AG04450 (cell line): ENCODE measurements at regions of chr12 and their contacts with region 1.

Region 1: GRCh38 chr12:62581288-62582064 is 114.8 kb downstream of the MON2 start:
- DNase-seq: peak; percentile 20
- H3K4me3 ChIP-seq: no peak overlapping the region
- H3K27ac ChIP-seq: no peak overlapping the region
- H3K27me3 ChIP-seq: no peaks in the 10 kb centered on the region
- CTCF ChIP-seq: peak; percentile 77

Region 2: DNA sequence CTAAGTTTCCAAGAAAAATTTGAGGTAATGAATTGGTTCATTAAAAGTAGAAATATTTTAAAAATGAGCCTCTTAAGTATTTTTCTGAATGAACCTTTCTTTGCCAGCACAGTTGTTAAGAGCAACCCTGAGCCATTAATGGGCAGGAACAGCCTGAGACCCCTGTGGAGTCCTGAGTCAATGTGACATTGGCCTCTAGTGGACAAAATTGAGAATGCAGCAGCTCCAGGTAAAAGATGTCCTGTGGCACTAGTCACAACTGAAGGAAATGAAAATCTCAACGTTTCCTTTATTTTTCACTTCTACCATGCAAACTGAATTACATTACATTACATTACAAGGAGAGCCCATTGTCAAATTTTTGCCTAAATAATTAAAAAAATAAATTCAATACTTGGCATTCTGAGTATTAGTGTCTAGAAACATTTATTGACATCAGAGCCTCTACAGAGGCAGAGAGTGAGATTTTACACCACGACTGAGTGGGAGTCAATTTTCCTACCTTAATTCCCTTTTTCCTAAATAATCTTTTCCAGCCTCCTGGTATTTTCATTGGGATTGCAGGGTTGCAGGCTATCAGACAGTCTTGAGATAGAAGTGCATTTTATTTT is 217.8 kb after region 1 on chr12:
- CTCF ChIA-PET with region 1: interaction called, 347 read pairs
- POLR2A ChIA-PET with region 1: no interaction called
- DNase-seq: peak; percentile 43
- H3K4me3 ChIP-seq: no peak overlapping the region
- H3K27ac ChIP-seq: no peak overlapping the region
- H3K27me3 ChIP-seq: peaks cover 2% of the 10 kb centered on the region
- CTCF ChIP-seq: peak; percentile 98